Vagina (tissue), 2 donors: ENCODE measurements at regions of chr3 and their contacts with region 1.

Region 1: GRCh38 chr3:24773798-24774197 is 279.1 kb upstream of the THRB start:
- DNase-seq: no peak
- H3K4me3 ChIP-seq: no peak overlapping the region
- H3K27ac ChIP-seq: no peak overlapping the region
- H3K4me1 ChIP-seq: peaks cover 5% of the 10 kb centered on the region
- H3K27me3 ChIP-seq: no peaks in the 10 kb centered on the region
- CTCF ChIP-seq: peak; percentile 27 to 67 (median 64)
- POLR2A ChIP-seq: no peak

Region 2: GRCh38 chr3:25594007-25594502 is 820.3 kb after region 1 on chr3:
- intact Hi-C with region 1: loop called (anchors 5 kb)
- DNase-seq: peak in 1 of 2 donors; percentile 75
- H3K4me3 ChIP-seq: no peak overlapping the region
- H3K27ac ChIP-seq: no peak overlapping the region
- H3K4me1 ChIP-seq: peaks cover 22% of the 10 kb centered on the region
- H3K27me3 ChIP-seq: no peaks in the 10 kb centered on the region
- CTCF ChIP-seq: peak; percentile 75 to 87 (median 77)
- POLR2A ChIP-seq: no peak